Left cardiac atrium (tissue), 4 donors: ENCODE measurements at regions of chr13 and their contacts with region 1.

Region 1: GRCh38 chr13:110412132-110412914 is 105.2 kb downstream of the COL4A2 start:
- DNase-seq: peak; percentile 89
- ATAC-seq: peak; percentile 79 to 81

Region 2: GRCh38 chr13:110225609-110226562 is 186.4 kb before region 1 on chr13:
- intact Hi-C with region 1: loop called (anchors 2 to 10 kb)
- DNase-seq: no peak
- ATAC-seq: no peak

Region 3: GRCh38 chr13:110233181-110233950 is 179.0 kb before region 1 on chr13:
- intact Hi-C with region 1: loop called in 1 of 2 experiments (anchors 10 kb)
- DNase-seq: peak; percentile 68
- ATAC-seq: peak; percentile 42 to 45

Region 4: DNA sequence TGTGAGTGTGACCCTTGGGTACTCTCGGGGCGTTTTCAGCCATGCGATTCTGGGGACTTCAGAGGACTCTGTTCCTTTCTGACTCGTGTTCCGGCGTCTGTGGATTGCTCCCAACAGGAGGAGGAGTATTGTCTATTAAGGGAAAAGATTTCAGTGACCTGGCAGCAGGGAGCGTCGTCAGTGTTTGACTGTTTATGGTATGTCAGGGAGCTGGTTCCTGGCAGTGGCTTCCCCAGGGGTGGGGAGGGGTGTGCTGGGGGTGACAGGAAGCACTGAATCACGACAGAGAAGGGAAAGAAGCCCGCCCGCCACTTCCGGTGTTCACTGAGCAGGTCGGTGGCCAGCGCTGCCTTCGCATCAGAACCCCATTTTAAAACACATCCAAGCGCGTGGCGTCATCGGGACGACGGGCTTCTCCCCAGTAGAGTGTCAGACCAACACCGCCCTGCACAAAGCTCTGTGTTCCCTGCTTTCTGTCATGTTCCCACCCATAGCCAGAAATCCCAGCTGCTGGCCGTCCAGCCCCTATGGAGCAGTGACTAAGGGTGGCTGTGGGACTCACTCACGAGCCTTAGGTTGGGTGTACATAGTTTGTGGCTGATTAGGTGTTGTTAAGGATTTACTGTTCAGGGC is 71.4 kb before region 1 on chr13:
- intact Hi-C with region 1: loop called in 1 of 2 experiments (anchors 10 kb)
- DNase-seq: peak; percentile 95
- ATAC-seq: peak; percentile 67 to 79